Activated CD8-positive, alpha-beta T cell treated with anti-CD3 and anti-CD28 coated beads for 36 hours (primary cell): ENCODE measurements at regions of chr7 and their contacts with region 1.

Region 1: GRCh38 chr7:90424720-90425119 is 21.5 kb downstream of the CLDN12 start:
- DNase-seq: no peak
- ATAC-seq: peak; percentile 88
- H3K4me3 Mint-ChIP-seq: no peak overlapping the region
- H3K27ac Mint-ChIP-seq: peak overlapping the region; percentile 74
- H3K4me1 Mint-ChIP-seq: peaks cover 15% of the 10 kb centered on the region
- H3K27me3 Mint-ChIP-seq: peaks cover 4% of the 10 kb centered on the region
- CTCF ChIP-seq: no peak

Region 2: GRCh38 chr7:90155206-90155605 is 269.5 kb before region 1 on chr7:
- CTCF ChIA-PET with region 1: interaction called, 19 read pairs
- POLR2A ChIA-PET with region 1: no interaction called
- intact Hi-C with region 1: loop called (anchors 1 kb)
- DNase-seq: no peak
- ATAC-seq: no peak
- H3K4me3 Mint-ChIP-seq: no peak overlapping the region
- H3K27ac Mint-ChIP-seq: no peak overlapping the region
- H3K4me1 Mint-ChIP-seq: peaks cover 3% of the 10 kb centered on the region
- H3K27me3 Mint-ChIP-seq: peaks cover 26% of the 10 kb centered on the region
- CTCF ChIP-seq: no peak

Region 3: DNA sequence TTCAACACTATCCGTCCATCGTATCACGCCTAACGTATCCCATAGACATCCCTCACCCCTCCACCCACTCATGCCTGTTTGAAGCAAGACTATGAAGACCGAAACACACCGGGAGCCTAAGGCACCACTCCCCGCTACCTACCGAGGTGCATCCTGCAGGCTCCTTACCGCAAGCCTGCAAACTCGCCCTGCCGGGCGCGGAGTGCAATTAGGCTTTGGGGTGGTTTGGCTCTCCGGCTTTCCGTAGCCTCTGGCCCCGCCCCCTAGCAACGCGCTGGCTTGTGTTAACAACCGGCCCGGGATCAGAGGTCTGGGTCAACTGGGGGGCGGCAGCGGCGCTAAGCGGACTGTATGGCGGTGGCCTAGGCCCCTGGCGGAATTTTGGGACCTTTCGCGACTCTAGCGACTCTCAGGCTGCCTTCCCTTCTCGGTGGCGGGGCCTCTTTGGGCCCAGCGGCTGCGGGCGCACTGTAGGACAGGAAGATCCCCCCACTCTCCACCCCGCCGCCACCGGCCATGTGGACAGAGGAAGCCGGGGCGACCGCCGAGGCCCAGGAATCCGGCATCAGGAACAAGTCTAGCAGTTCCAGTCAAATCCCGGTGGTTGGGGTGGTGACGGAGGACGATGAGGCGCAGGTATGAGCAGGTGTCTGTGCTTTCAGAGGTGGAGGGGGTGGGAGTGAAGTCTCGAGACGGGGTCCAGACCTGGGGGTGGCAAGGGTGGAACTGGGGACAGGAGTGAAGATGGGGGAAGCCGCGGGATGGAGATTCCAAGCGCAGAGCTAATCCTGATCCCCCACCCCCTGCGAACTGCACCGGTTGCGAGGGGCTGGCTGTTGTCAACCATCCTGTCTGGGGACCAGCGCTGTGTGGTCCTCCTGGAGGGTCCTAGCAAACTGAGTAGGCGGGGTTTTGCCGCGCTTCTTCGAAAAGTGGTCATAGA is 179.5 kb before region 1 on chr7 and contains the start of gene CFAP69:
- CTCF ChIA-PET with region 1: interaction called, 3 read pairs
- POLR2A ChIA-PET with region 1: no interaction called
- intact Hi-C with region 1: loop called (anchors 10 kb)
- DNase-seq: peak; percentile 92
- ATAC-seq: peak; percentile 93
- H3K4me3 Mint-ChIP-seq: peak within 1 kb of the TSS; percentile 75
- H3K27ac Mint-ChIP-seq: no peak within 1 kb of the TSS
- H3K4me1 Mint-ChIP-seq: peaks cover 11% of the 10 kb centered on the region
- H3K27me3 Mint-ChIP-seq: peaks cover 40% of the 10 kb centered on the region
- CTCF ChIP-seq: no peak
- total RNA-seq, gene CFAP69: 0.07 to 0.69 TPM

Region 4: DNA sequence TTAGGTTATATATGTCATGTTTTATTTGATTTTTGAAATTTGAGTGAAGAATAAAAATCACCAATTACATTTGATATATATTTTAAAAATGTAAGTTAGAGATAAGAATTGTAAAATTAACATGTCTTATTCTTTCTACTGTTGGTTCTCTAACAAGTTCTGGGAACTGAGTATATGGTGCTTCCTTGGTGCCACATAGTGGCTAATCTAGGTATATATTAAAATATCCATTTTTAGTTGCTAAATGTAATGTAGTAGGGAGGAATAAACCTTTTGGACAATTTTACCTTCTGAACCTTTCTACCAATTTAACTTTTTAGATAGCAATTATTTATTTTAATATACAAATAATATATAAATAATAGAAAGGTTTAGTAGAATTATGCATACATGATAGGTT is 162.3 kb before region 1 on chr7:
- CTCF ChIA-PET with region 1: interaction called, 4 read pairs
- POLR2A ChIA-PET with region 1: no interaction called
- intact Hi-C with region 1: loop called (anchors 2 kb)
- DNase-seq: no peak
- ATAC-seq: peak; percentile 69
- H3K4me3 Mint-ChIP-seq: no peak overlapping the region
- H3K27ac Mint-ChIP-seq: no peak overlapping the region
- H3K4me1 Mint-ChIP-seq: no peaks in the 10 kb centered on the region
- H3K27me3 Mint-ChIP-seq: peaks cover 9% of the 10 kb centered on the region
- CTCF ChIP-seq: peak; percentile 31

Region 5: DNA sequence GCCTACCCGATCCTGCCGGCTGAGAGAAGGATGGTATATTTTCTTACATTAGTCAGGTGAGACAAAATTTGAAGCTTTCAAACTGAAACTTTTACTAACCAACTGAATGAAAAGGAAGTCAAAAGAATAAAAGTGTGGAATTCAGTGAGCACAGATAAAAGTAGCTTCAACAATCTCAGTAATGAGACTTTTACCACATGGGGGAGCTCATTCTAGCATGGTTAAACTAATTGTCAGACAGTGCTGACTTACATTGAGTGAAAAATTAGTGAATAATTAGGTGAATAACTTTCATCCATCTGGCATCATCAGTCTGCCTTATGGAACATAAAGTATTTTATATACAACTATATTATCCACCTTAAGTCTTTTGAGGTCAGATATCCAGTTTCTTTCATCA is 112.0 kb before region 1 on chr7:
- CTCF ChIA-PET with region 1: interaction called, 37 read pairs
- POLR2A ChIA-PET with region 1: no interaction called
- intact Hi-C with region 1: loop called (anchors 5 kb)
- DNase-seq: no peak
- ATAC-seq: no peak
- H3K4me3 Mint-ChIP-seq: no peak overlapping the region
- H3K27ac Mint-ChIP-seq: no peak overlapping the region
- H3K4me1 Mint-ChIP-seq: no peaks in the 10 kb centered on the region
- H3K27me3 Mint-ChIP-seq: peaks cover 20% of the 10 kb centered on the region
- CTCF ChIP-seq: peak; percentile 28

Region 6: DNA sequence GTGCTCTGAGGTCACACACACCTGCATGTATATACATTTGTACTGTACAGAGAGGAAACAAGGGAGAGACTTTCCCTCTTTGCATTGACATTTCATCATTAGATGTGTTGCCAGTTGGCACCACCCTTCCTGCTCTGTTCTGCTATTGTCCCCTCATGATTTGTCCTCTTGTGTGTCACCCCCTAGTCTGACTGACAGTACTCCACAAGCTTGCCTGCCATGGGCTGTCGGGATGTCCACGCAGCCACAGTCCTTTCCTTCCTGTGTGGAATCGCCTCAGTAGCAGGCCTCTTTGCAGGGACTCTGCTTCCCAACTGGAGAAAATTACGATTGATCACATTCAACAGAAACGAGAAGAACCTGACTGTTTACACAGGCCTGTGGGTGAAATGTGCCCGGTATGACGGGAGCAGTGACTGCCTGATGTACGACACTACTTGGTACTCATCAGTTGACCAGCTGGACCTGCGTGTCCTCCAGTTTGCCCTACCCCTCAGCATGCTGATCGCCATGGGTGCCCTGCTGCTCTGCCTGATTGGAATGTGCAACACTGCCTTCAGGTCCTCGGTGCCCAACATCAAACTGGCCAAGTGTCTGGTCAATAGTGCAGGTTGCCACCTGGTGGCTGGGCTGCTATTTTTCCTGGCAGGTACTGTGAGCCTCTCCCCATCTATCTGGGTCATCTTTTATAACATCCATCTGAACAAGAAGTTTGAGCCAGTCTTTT is 12.1 kb before region 1 on chr7:
- CTCF ChIA-PET with region 1: interaction called, 14 read pairs
- POLR2A ChIA-PET with region 1: interaction called, 3 read pairs
- intact Hi-C with region 1: no loop called
- DNase-seq: peak; percentile 53
- ATAC-seq: peak; percentile 30
- H3K4me3 Mint-ChIP-seq: no peak overlapping the region
- H3K27ac Mint-ChIP-seq: no peak overlapping the region
- H3K4me1 Mint-ChIP-seq: no peaks in the 10 kb centered on the region
- H3K27me3 Mint-ChIP-seq: no peaks in the 10 kb centered on the region
- CTCF ChIP-seq: peak; percentile 35